ENCODE measurements at regions of chr17 and their contacts with region 1.

Region 1: GRCh38 chr17:46979147-46979863 is at the start of gene RPRML:
- DNase-seq: peak; percentile 59
- ATAC-seq: peak; percentile 2; the same call in 1 of the 2 replicates
- H3K4me3 Mint-ChIP-seq: peak within 1 kb of the TSS; percentile 92
- H3K27ac Mint-ChIP-seq: no peak within 1 kb of the TSS
- H3K4me1 Mint-ChIP-seq: peaks cover 44% of the 10 kb centered on the region
- H3K27me3 Mint-ChIP-seq: peaks cover 31% of the 10 kb centered on the region
- CTCF ChIP-seq: no peak
- total RNA-seq, gene RPRML: 3.1 to 4.9 TPM (median 4.7 TPM) in 3 replicates

Region 2: GRCh38 chr17:46995841-46996571 is 16.7 kb after region 1 on chr17:
- CTCF ChIA-PET with region 1: interaction called, 12 read pairs
- POLR2A ChIA-PET with region 1: no interaction called
- DNase-seq: no peak
- ATAC-seq: no peak
- H3K4me3 Mint-ChIP-seq: no peak overlapping the region
- H3K27ac Mint-ChIP-seq: no peak overlapping the region
- H3K4me1 Mint-ChIP-seq: no peaks in the 10 kb centered on the region
- H3K27me3 Mint-ChIP-seq: no peaks in the 10 kb centered on the region
- CTCF ChIP-seq: no peak

Measured in WTC11 (cell line).